Transverse colon (tissue), 4 donors: ENCODE measurements at regions of chr6 and their contacts with region 1.

Region 1: GRCh38 chr6:146805925-146806324 is 207.2 kb downstream of the ADGB start:
- DNase-seq: no peak
- H3K4me3 ChIP-seq: no peak overlapping the region
- H3K27ac ChIP-seq: no peak overlapping the region
- H3K4me1 ChIP-seq: no peaks in the 10 kb centered on the region
- H3K27me3 ChIP-seq: no peaks in the 10 kb centered on the region
- CTCF ChIP-seq: no peak
- EP300 ChIP-seq: no peak
- POLR2A ChIP-seq: no peak

Region 2: DNA sequence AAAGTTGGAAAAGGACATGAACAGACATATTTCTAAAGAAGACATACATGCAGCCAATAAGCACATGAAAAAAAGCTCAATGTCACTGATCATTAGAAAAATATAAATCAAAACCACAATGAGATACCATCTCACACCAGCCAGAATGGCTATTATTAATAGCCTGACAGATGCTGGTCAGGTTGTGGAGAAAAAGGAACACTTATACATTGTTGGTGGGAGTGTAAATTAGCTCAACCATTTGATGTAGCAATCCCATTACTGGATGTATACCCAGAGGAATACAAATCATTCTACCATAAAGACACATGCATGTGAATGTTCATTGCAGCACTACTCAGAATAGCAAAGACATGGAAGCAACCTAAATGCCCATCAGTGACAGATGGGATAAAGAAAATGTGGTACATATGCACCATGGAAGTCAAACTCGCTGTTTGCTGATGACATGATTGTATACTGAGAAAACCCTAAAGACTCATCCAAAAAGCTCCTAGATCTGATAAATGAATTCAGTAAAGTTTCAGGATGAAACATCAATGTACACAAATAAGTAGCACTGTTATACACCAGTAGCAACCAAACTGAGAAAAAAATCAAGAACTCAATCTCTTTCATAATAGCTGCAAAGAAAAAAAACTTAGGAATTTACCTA is 10.3 kb before region 1 on chr6:
- in situ Hi-C with region 1: no loop called
- intact Hi-C with region 1: loop called (anchors 1 kb)
- DNase-seq: no peak
- H3K4me3 ChIP-seq: no peak overlapping the region
- H3K27ac ChIP-seq: no peak overlapping the region
- H3K4me1 ChIP-seq: no peaks in the 10 kb centered on the region
- H3K27me3 ChIP-seq: no peaks in the 10 kb centered on the region
- CTCF ChIP-seq: no peak
- EP300 ChIP-seq: no peak
- POLR2A ChIP-seq: no peak